ENCODE measurements at regions of chr19 and their contacts with region 1.

Region 1: GRCh38 chr19:49104229-49104864 is 9.8 kb upstream of the LIN7B start:
- DNase-seq: no peak
- ATAC-seq: no peak

Region 2: DNA sequence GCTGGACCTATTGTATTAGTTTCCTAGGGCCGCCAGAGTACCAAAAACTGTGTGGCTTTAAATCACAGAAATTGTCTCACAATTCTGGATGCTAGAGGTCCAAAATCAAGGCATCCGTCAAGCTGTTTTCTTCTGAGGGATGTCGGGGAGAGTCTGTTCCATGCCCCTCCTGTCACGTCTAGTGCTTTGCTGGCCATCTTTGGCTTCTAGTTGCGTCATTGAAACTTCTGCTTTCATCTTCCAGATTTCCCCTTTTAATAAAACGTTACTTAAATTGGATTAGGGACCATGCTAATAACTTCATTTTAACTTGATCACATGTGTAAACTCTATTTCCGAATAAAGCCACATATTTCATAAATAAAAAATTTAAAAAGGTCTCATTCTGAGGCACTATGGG is 100.8 kb after region 1 on chr19:
- intact Hi-C with region 1: loop called (anchors 5 kb)
- DNase-seq: no peak
- ATAC-seq: no peak

Region 3: DNA sequence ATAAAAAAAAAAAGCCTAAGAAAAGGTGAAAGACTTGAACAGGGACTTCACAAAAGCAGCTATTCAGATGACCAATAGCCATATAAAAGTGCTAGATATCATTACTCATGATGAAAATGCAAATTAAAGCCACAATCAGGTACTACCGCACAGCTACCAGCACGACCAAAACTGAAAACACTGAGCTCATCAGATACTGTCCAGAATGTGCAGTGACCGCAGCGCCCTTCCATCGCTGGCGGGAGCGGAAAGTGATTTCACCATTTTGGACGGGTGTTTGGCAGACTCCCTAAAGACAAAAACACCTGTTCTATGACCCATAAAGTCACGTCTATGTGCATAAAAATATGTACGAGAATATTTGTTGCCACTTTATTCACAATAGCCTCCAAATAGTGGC is 159.9 kb after region 1 on chr19:
- intact Hi-C with region 1: no loop called
- DNase-seq: no peak
- ATAC-seq: no peak

Region 4: DNA sequence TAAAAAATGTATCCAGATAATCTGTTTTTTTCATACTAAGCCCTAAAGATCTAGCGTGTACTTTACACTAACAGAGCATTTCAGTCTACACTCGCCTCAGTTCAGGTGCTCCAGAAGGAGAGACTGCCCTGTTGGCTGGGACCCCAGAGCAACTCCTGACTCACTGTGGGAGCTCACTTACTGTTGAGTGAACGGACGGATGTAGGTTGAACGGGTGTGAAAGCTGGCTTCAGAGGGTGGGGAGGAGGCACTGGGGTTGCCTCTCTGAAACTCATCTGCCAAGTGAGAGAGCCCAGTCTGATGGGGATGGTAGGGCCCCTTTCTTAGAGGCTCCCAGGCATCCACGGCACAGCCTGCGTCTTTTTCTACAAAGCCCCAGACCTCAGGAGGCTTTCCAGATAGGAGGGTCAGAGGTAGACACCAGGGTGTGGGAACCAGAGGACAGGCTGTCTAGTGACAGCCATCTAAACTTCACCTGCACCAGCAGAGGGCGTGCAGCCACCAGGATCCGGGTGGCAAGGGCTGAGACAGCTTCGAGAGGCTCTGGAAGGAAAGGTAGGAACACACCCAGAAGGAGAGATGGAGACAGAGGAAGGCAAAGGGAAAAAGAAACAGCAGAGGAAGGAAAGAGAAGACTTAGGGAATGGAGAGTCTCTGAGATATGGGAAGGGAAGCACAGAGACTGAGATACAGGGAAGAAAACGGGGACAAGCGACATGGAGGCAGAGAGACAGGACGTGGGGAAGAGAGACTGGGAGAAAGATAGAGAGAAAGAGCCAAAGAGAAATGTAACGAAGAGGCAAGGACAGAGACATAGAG is 287.4 kb after region 1 on chr19:
- intact Hi-C with region 1: no loop called
- DNase-seq: peak; percentile 84
- ATAC-seq: peak; percentile 89